Calu3 (cell line): ENCODE measurements at regions of chr6 and their contacts with region 1.

Region 1: GRCh38 chr6:44074439-44075136 is 52.7 kb downstream of the MRPL14 start:
- DNase-seq: peak; percentile 83
- H3K4me3 Mint-ChIP-seq: peak overlapping the region; percentile 87
- H3K27ac Mint-ChIP-seq: peak overlapping the region; percentile 89
- H3K4me1 Mint-ChIP-seq: peaks cover 89% of the 10 kb centered on the region
- H3K27me3 Mint-ChIP-seq: no peaks in the 10 kb centered on the region
- CTCF ChIP-seq: peak; percentile 96

Region 2: GRCh38 chr6:43667245-43668150 is 407.1 kb before region 1 on chr6:
- CTCF ChIA-PET with region 1: interaction called, 47 read pairs
- intact Hi-C with region 1: loop called (anchors 1 kb)
- DNase-seq: peak; percentile 94
- H3K4me3 Mint-ChIP-seq: peak overlapping the region; percentile 43
- H3K27ac Mint-ChIP-seq: peak overlapping the region; percentile 80
- H3K4me1 Mint-ChIP-seq: peaks cover 40% of the 10 kb centered on the region
- H3K27me3 Mint-ChIP-seq: no peaks in the 10 kb centered on the region
- CTCF ChIP-seq: peak; percentile 98

Region 3: DNA sequence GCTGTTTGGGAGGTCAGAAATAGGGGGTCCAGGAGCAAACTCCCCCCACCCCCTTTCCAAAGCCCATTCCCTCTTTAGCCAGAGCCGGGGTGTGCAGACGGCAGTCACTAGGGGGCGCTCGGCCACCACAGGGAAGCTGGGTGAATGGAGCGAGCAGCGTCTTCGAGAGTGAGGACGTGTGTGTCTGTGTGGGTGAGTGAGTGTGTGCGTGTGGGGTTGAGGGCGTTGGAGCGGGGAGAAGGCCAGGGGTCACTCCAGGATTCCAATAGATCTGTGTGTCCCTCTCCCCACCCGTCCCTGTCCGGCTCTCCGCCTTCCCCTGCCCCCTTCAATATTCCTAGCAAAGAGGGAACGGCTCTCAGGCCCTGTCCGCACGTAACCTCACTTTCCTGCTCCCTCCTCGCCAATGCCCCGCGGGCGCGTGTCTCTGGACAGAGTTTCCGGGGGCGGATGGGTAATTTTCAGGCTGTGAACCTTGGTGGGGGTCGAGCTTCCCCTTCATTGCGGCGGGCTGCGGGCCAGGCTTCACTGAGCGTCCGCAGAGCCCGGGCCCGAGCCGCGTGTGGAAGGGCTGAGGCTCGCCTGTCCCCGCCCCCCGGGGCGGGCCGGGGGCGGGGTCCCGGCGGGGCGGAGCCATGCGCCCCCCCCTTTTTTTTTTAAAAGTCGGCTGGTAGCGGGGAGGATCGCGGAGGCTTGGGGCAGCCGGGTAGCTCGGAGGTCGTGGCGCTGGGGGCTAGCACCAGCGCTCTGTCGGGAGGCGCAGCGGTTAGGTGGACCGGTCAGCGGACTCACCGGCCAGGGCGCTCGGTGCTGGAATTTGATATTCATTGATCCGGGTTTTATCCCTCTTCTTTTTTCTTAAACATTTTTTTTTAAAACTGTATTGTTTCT is 304.8 kb before region 1 on chr6 and contains the start of gene VEGFA:
- CTCF ChIA-PET with region 1: interaction called, 30 read pairs
- intact Hi-C with region 1: loop called (anchors 1 kb)
- DNase-seq: peak; percentile 97
- H3K4me3 Mint-ChIP-seq: peak within 1 kb of the TSS; percentile 87
- H3K27ac Mint-ChIP-seq: peak within 1 kb of the TSS; percentile 95
- H3K4me1 Mint-ChIP-seq: peaks cover 52% of the 10 kb centered on the region
- H3K27me3 Mint-ChIP-seq: no peaks in the 10 kb centered on the region
- CTCF ChIP-seq: peak; percentile 99
- total RNA-seq, gene VEGFA: 345 and 407 TPM in 2 replicates

Region 4: GRCh38 chr6:43856005-43856765 is 218.4 kb before region 1 on chr6:
- CTCF ChIA-PET with region 1: interaction called, 15 read pairs
- intact Hi-C with region 1: loop called (anchors 5 kb)
- DNase-seq: peak; percentile 86
- H3K4me3 Mint-ChIP-seq: no peak overlapping the region
- H3K27ac Mint-ChIP-seq: peak overlapping the region; percentile 72
- H3K4me1 Mint-ChIP-seq: peaks cover 63% of the 10 kb centered on the region
- H3K27me3 Mint-ChIP-seq: no peaks in the 10 kb centered on the region
- CTCF ChIP-seq: peak; percentile 94

Region 5: DNA sequence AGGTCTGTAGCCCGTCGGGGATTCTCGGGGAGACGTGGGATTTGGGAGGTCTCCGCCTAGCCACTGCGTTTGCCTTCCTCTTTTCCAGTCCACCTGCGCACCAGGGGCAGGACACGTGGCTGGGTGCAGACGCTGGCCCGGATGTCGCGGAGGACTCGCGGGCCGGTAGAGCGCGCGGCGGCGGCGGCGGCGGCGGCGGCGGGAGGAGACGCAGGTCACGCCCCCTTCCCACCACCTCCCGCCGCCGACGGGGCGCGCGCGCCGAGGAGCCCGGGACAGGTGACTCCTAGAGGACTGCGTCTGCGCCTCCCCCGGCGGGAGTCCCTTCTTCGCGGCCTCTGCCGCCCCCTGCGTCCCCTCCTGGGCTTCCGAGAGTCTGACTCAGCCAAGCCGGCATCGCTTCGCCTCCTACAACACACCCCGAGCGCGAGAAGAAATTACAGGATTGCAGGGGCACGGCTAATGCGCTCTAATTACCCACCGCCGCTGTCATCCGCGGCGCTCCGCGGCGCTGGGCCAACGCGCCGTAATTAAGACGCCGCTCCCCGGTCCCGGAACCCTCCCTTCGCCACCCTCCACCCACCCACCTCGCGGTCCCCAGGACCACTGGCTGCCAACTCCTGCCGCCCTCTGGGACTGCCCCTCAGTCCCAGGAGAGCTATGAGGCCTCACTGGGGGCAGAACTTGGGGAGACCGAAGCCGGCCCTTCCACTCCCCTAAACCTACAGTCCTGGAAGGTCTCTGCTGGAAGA is 71.8 kb before region 1 on chr6:
- CTCF ChIA-PET with region 1: interaction called, 10 read pairs
- intact Hi-C with region 1: loop called (anchors 1 kb)
- DNase-seq: peak; percentile 97
- H3K4me3 Mint-ChIP-seq: peak overlapping the region; percentile 78
- H3K27ac Mint-ChIP-seq: peak overlapping the region; percentile 96
- H3K4me1 Mint-ChIP-seq: peaks cover 70% of the 10 kb centered on the region
- H3K27me3 Mint-ChIP-seq: no peaks in the 10 kb centered on the region
- CTCF ChIP-seq: peak; percentile 10

Region 6: DNA sequence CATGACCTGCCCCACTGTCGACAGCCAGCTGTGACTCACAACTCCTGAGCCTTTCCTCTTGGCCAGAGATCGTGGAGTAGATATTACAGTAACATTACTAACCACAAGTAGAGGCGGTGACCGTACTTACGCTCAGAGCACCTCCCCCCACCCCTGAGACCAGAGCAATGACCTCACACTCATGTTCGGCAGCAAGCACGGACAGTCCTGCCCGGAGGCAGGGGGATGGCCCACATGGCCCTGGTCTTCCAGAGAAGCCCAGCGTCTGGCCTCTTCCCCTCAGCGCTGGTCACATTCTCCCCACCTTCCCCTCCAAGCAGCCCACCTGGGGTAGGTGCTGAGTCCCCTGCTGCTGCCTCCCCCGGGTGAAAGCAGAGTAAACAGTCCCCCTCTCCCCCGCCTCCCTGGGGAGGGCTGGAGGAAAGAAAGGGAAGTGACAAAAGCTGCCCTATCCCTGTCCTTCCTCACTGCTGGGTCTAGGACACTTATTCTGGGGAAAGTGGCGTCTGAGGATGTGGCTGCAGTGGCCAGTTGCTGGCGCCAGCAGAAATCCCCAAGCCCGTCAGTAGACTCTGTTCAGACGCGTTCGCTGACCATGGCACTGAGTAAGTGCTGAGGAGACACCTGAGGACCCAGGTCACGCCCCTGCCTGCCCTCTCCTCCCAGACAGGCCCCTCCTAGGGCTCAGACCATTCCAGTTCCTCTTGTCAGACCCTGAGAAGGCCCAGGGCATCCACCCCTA is 15.8 kb before region 1 on chr6:
- CTCF ChIA-PET with region 1: interaction called, 17 read pairs
- intact Hi-C with region 1: no loop called
- DNase-seq: peak; percentile 94
- H3K4me3 Mint-ChIP-seq: peak overlapping the region; percentile 54
- H3K27ac Mint-ChIP-seq: peak overlapping the region; percentile 98
- H3K4me1 Mint-ChIP-seq: peaks cover 60% of the 10 kb centered on the region
- H3K27me3 Mint-ChIP-seq: no peaks in the 10 kb centered on the region
- CTCF ChIP-seq: no peak

Region 7: DNA sequence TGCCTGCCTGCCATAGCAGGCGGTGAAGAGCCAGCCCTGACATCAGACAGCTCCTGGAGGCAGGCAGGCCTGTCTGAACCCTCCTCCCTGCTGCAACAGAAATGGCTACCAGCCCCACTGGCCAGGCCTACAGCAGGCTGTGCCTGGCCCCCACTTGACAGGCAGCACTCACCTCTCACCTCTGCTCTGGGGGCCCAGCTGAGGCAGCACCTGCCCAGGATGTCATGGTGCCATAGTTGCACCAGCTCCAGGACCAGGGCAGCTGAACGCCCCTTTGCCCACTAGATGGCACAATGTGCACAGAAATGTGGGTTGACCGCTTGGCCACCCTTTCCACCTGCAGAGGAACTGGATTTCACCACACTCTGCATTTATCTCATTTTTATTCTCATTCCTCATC is 22.0 kb after region 1 on chr6:
- CTCF ChIA-PET with region 1: interaction called, 22 read pairs
- intact Hi-C with region 1: no loop called
- DNase-seq: peak; percentile 90
- H3K4me3 Mint-ChIP-seq: no peak overlapping the region
- H3K27ac Mint-ChIP-seq: no peak overlapping the region
- H3K4me1 Mint-ChIP-seq: peaks cover 35% of the 10 kb centered on the region
- H3K27me3 Mint-ChIP-seq: no peaks in the 10 kb centered on the region
- CTCF ChIP-seq: peak; percentile 96